ENCODE measurements at regions of chr5 and their contacts with region 1.

Region 1: DNA sequence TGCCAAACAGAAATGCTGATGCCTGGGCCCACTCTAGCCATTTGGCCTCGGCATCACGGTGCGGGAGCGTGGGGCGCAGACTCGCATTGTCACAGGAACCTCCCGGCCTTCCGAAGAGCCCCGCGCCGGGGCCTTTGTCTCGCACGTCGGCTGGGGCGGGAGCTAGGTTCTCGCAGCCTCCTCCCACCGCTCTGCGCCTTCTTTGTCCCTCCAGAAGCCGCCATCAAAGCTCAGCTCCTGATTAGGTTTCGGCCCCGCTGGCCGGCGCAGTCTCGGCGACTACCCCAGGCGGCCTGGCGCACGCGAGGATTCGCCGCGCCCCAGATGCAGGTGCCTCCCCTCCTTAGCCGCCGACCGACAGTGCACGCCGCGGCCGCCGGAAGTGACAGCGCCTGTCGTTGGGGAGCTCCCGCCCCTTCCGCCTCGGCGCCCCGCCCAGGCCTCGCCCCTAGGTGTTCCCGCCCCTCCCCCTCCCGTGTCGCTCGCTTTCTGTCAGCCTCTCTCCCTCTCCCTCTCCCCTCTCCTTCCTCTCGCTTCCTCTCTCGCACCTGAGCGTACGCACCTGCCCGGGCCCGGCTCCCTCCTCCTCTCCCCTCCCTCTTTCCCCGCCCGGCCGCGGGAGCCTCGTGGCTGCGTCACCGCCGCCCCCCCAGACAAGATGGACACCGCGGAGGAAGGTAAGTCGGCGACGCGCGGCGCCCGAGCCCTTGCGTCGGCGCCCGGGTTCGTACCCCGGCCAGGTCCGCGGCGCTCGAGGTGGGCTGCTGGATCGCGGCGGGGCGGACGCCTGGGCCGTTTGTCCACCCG is at the start of gene MARCHF6:
- DNase-seq: peak; percentile 89
- H3K4me3 Mint-ChIP-seq: peak within 1 kb of the TSS; percentile 100
- H3K27ac Mint-ChIP-seq: peak within 1 kb of the TSS; percentile 100
- H3K4me1 Mint-ChIP-seq: peaks cover 48% of the 10 kb centered on the region
- H3K27me3 Mint-ChIP-seq: no peaks in the 10 kb centered on the region
- total RNA-seq, gene MARCHF6: 98.8 and 109 TPM in 2 replicates

Region 2: GRCh38 chr5:10283927-10284635 is 69.4 kb before region 1 on chr5:
- intact Hi-C with region 1: loop called (anchors 2 kb)
- DNase-seq: peak; percentile 62
- H3K4me3 Mint-ChIP-seq: no peak overlapping the region
- H3K27ac Mint-ChIP-seq: no peak overlapping the region
- H3K4me1 Mint-ChIP-seq: no peaks in the 10 kb centered on the region
- H3K27me3 Mint-ChIP-seq: peaks cover 6% of the 10 kb centered on the region

Region 3: DNA sequence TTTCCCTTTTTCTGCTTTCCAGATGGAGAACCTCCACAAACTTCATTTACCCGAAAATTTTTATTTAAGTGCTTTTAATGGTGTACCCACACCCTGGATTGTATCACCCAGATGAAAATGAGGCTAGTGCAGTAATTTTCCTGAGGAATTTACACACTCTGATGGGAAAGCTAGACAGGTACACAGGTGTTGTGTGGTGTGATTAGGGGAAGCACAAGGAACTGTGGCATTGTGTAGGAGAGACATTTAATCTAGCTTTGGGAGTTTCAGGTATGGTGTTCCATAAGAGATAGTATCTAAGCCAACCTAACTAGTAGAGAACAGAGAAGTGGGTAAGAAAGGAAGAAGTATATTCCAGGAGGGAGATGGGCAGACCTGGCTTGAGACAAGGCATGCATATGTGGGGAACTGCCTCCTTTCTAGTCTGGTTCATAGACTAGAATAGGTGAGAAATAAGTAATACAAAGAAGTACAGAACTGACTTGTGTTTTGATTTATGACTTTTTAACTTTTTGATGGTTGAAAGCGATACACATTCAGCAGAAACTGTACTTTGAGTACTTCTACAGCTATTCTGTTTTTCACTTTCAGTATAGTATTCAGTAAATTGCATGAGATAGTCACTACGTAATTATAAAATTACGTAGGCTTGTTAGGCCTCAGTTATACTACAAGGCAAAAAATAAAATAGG is 65.4 kb after region 1 on chr5:
- intact Hi-C with region 1: loop called (anchors 1 kb)
- DNase-seq: no peak
- H3K4me3 Mint-ChIP-seq: no peak overlapping the region
- H3K27ac Mint-ChIP-seq: no peak overlapping the region
- H3K4me1 Mint-ChIP-seq: peaks cover 20% of the 10 kb centered on the region
- H3K27me3 Mint-ChIP-seq: no peaks in the 10 kb centered on the region

Region 4: DNA sequence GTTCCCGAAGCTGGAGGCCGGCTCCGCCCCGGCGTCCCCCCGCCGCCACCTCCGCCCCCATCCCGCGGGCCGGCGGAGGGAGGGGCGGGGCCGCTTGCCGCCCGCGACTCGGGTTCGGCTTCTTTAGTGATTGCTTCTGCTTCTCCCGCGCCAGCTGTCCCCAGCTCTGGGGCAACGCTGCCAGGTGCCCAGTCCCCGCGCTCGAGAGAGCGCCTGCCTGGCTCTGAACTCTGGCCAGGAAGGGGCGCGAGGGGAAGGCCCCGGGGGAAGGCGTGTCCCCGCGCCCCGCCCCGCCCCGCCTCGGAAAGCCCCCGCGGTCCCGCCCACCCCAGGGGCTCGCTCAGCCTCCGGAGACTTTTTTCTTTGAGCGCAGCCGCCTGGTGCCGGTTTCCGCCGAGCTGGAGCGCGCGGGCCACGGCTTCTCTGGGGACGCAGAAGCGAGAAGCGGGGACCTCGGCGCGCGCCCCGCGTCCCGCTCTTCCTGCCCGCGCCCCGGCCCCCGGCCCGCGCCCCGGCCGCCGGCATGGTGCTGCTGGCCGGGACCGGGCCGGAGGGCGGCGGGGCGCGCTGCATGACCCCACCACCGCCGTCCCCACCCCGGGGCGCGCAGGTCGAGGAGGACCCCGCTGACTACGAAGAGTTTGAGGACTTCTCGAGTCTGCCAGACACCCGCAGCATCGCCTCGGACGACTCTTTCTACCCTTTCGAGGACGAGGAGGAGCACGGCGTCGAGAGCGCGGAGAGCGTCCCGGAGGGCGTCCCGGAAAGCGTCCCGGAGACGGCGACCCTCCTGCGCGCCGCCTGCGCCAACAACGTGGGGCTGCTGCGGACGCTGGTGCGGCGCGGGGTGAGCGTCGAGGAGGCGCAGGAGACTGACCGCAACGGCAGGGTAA is 210.7 kb after region 1 on chr5 and contains the start of gene ANKRD33B:
- intact Hi-C with region 1: loop called (anchors 1 kb)
- DNase-seq: peak; percentile 82
- H3K4me3 Mint-ChIP-seq: peak within 1 kb of the TSS; percentile 95
- H3K27ac Mint-ChIP-seq: peak within 1 kb of the TSS; percentile 89
- H3K4me1 Mint-ChIP-seq: peaks cover 54% of the 10 kb centered on the region
- H3K27me3 Mint-ChIP-seq: peaks cover 23% of the 10 kb centered on the region
- total RNA-seq, gene ANKRD33B: 21.4 and 21.5 TPM in 2 replicates

Region 5: DNA sequence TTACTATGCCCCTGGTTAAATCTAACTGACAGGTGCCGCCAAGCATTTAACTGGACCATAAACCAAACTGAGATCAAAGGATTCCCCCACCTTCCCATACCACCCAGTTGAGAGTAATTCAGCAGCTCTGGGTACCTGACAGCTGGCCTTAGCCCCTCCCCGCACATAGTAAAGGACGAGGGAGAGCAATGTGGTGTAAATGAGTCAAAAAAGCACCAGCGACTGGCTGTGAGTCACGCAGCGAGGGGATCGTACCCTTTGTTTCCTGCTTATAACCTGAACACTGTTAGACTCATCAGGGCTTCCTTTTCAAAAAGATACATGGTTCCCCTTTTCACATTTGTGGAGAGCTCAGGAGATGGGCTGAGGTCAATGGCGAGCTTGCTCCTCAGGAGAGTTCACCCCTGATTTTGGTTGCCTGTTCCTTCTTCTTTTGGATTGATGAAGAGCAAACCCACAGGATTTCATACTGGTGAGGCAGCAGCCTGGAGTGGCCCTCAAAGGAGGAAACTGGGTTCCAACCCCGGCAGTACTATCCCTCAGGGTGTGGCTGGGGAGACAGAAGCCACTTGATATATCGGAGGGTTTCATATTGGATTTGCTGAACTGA is 281.9 kb after region 1 on chr5:
- intact Hi-C with region 1: loop called (anchors 1 kb)
- DNase-seq: peak; percentile 73
- H3K4me3 Mint-ChIP-seq: peak overlapping the region; percentile 69
- H3K27ac Mint-ChIP-seq: peak overlapping the region; percentile 93
- H3K4me1 Mint-ChIP-seq: peaks cover 80% of the 10 kb centered on the region
- H3K27me3 Mint-ChIP-seq: no peaks in the 10 kb centered on the region